ENCODE measurements at regions of chr11 and their contacts with region 1.

Region 1: DNA sequence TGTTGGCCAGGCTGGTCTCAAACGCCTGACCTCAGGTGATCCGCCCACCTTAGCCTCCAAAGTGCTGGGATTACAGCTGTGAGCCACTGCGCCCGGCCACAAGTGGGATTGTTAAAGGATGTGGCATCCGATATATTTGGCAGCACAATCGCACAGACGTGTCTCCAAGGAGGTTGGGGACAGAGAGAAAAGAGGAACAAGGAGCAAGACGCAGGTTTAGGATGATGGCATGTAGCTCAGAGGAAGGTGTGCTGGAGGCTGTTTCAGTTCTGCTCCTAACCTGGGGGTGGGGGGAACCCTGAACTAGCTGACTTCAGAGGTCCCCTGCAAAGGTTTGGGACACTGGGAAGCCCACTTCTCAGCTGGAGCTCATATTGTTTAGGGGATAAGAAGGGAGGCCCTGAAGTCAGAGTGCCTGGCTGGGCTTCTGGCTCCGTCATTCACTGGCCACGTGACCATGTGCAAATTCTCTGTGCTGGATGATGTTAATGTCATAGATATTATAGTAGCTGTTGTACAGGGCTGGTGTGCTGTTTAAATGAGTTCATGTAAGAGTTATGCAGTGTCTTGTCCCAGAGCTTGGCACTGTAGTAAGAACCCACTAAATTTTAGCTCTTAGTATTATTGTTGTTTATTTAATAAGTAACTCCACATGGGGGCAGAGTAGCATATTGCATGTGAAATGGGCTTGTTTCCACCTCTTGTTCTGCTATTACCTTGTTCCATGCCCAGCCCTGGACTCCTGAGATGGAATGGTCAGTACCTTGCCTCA is 129.7 kb downstream of the ST3GAL4 start:
- DNase-seq: no peak
- H3K4me3 ChIP-seq: no peak overlapping the region
- CTCF ChIP-seq: no peak
- POLR2A ChIP-seq: no peak

Region 2: GRCh38 chr11:126310228-126310991 is 174.8 kb before region 1 on chr11:
- intact Hi-C with region 1: loop called (anchors 2 kb)
- DNase-seq: peak; percentile 73 to 93
- H3K4me3 ChIP-seq: no peak overlapping the region
- CTCF ChIP-seq: peak in 1 of 3 donors; percentile 61
- POLR2A ChIP-seq: no peak

Region 3: DNA sequence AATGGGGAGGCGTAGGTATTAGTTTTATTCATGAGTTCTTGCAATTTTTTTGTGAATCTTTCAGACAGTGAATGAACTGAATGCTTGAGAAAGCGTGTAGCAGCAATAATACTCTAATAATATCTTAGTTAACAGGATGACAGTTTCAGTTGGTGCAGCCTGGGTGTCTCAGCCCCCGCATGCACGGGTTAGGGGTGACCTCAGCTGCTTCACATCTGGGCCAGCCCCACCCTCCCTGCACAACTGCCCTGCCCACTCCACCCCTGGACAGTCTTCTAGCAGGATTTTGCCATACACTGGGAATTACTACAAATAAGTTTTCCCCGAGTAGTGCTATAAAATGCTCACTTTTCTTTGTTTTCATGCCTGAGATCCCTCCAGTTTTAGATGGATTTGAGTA is 46.5 kb before region 1 on chr11:
- intact Hi-C with region 1: loop called (anchors 2 kb)
- DNase-seq: peak in 1 of 2 donors; percentile 84
- H3K4me3 ChIP-seq: no peak overlapping the region
- CTCF ChIP-seq: no peak
- POLR2A ChIP-seq: no peak